ENCODE measurements at regions of chr12 and their contacts with region 1.

Region 1: GRCh38 chr12:13278249-13278787 is 81.8 kb downstream of the EMP1 start:
- DNase-seq: peak; percentile 70
- H3K4me3 Mint-ChIP-seq: no peak overlapping the region
- H3K27ac Mint-ChIP-seq: no peak overlapping the region
- H3K4me1 Mint-ChIP-seq: peaks cover 2% of the 10 kb centered on the region
- H3K27me3 Mint-ChIP-seq: peaks cover 33% of the 10 kb centered on the region

Region 2: DNA sequence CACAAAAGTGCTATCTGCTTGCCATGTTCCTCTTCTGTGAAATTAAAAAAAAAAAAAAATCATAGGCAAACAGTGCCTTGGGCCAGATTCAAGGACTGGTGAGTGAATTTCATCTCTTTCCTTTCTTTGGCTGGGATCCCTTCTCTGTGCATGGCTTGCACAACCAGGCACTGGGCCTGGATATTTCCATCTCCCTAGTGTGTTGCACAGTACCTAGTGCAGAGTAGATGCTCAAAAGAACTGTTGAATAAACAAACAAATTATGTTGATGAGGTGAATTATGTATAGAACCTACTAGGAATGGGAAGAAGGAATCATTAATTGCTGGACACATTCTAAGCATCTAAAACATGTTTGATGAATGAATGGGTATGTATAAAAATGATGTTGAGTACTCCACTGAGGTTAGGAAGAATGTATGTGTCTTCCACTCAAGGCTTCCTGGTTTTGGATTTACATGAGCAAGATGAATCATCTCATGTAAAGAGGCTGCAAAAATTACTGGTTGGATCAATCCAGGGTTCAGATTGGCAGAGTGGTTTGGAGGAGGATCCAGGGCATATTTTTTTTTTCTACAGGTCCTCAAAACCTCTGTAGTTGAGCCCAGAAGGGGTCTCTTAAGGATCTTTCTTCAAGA is 11.5 kb after region 1 on chr12:
- CTCF ChIA-PET with region 1: interaction called, 13 read pairs
- POLR2A ChIA-PET with region 1: no interaction called
- intact Hi-C with region 1: no loop called
- DNase-seq: no peak
- H3K4me3 Mint-ChIP-seq: no peak overlapping the region
- H3K27ac Mint-ChIP-seq: no peak overlapping the region
- H3K4me1 Mint-ChIP-seq: no peaks in the 10 kb centered on the region
- H3K27me3 Mint-ChIP-seq: peaks cover 8% of the 10 kb centered on the region

Region 3: GRCh38 chr12:13417516-13417915 is 139.2 kb after region 1 on chr12:
- CTCF ChIA-PET with region 1: no interaction called
- POLR2A ChIA-PET with region 1: no interaction called
- intact Hi-C with region 1: no loop called
- DNase-seq: no peak
- H3K4me3 Mint-ChIP-seq: no peak overlapping the region
- H3K27ac Mint-ChIP-seq: no peak overlapping the region
- H3K4me1 Mint-ChIP-seq: no peaks in the 10 kb centered on the region
- H3K27me3 Mint-ChIP-seq: no peaks in the 10 kb centered on the region

Region 4: GRCh38 chr12:13534645-13535398 is 256.5 kb after region 1 on chr12:
- CTCF ChIA-PET with region 1: interaction called, 6 read pairs
- POLR2A ChIA-PET with region 1: no interaction called
- intact Hi-C with region 1: loop called (anchors 10 kb)
- DNase-seq: peak; percentile 56
- H3K4me3 Mint-ChIP-seq: no peak overlapping the region
- H3K27ac Mint-ChIP-seq: no peak overlapping the region
- H3K4me1 Mint-ChIP-seq: peaks cover 3% of the 10 kb centered on the region
- H3K27me3 Mint-ChIP-seq: peaks cover 14% of the 10 kb centered on the region

Region 5: DNA sequence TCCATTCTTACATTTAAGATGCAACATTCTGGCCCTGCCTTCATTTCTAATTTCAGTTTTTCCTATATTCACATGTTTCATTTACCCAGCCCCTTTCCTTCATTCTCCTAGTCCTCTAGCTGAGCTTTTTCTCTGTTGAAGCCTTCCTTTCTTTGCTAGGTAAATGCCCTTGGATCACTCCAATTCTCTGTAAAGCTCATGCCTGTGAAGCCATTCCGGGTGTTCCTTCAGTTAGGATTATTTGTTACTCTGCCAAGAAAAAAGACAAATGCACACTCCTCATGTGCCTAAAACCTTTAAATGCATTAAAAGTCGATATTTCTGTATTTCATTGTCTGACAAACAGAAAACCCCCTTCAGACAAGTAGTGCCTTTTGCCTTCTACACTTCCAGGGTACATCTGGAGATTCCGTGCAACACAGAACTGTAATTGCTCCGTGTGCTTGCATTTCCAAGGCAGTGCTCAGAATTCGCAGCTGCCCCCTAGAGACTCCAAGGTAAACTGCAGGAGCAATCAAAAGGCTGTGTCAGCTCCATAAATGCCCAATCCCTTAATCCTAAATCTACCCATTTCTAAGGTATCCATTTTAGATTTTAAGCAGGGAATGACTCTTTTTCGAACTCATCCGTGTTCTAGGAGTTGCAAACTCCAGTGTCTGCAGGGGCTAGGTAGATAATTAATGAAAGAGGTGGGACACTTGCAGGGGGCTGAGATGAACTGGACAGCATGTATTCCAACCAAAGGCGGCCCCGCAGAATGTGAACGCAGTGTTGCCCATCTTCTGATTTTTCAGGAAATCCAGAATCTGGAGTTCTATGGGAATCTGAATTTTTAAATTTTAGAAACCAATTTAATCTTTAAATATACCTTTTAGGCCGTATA is 382.9 kb after region 1 on chr12:
- CTCF ChIA-PET with region 1: interaction called, 3 read pairs
- POLR2A ChIA-PET with region 1: no interaction called
- intact Hi-C with region 1: loop called (anchors 2 kb)
- DNase-seq: peak; percentile 30
- H3K4me3 Mint-ChIP-seq: no peak overlapping the region
- H3K27ac Mint-ChIP-seq: no peak overlapping the region
- H3K4me1 Mint-ChIP-seq: no peaks in the 10 kb centered on the region
- H3K27me3 Mint-ChIP-seq: no peaks in the 10 kb centered on the region

Region 6: GRCh38 chr12:14167005-14167628 is 888.8 kb after region 1 on chr12:
- CTCF ChIA-PET with region 1: interaction called, 12 read pairs
- POLR2A ChIA-PET with region 1: no interaction called
- intact Hi-C with region 1: no loop called
- DNase-seq: peak; percentile 53
- H3K4me3 Mint-ChIP-seq: no peak overlapping the region
- H3K27ac Mint-ChIP-seq: no peak overlapping the region
- H3K4me1 Mint-ChIP-seq: no peaks in the 10 kb centered on the region
- H3K27me3 Mint-ChIP-seq: peaks cover 4% of the 10 kb centered on the region